CD8-positive, alpha-beta T cell (primary cell): ENCODE measurements at regions of chr11 and their contacts with region 1.

Region 1: GRCh38 chr11:95790123-95790932 is at the start of gene CEP57:
- DNase-seq: peak; percentile 80 to 98 (median 94)
- ATAC-seq: peak; percentile 54
- H3K4me3 ChIP-seq: peak within 1 kb of the TSS; percentile 86 to 93
- H3K4me3 Mint-ChIP-seq: peak within 1 kb of the TSS; percentile 99
- H3K27ac ChIP-seq: peak within 1 kb of the TSS; percentile 99 to 100
- H3K27ac Mint-ChIP-seq: peak within 1 kb of the TSS; percentile 100
- H3K4me1 ChIP-seq: peaks cover 29% of the 10 kb centered on the region
- H3K4me1 Mint-ChIP-seq: peaks cover 63% of the 10 kb centered on the region
- H3K27me3 ChIP-seq: no peaks in the 10 kb centered on the region
- H3K27me3 Mint-ChIP-seq: no peaks in the 10 kb centered on the region
- CTCF ChIP-seq: no peak
- total RNA-seq, gene CEP57: 53.2 to 53.7 TPM

Region 2: GRCh38 chr11:94134651-94135512 is 1655.4 kb before region 1 on chr11:
- CTCF ChIA-PET with region 1: no interaction called
- POLR2A ChIA-PET with region 1: no interaction called
- intact Hi-C with region 1: loop called in 1 of 2 experiments (anchors 5 kb)
- DNase-seq: peak in 1 of 9 experiments; percentile 29
- ATAC-seq: no peak
- H3K4me3 ChIP-seq: no peak overlapping the region
- H3K4me3 Mint-ChIP-seq: no peak overlapping the region
- H3K27ac ChIP-seq: no peak overlapping the region
- H3K27ac Mint-ChIP-seq: no peak overlapping the region
- H3K4me1 ChIP-seq: peaks cover 22% of the 10 kb centered on the region
- H3K4me1 Mint-ChIP-seq: peaks cover 45% of the 10 kb centered on the region
- H3K27me3 ChIP-seq: no peaks in the 10 kb centered on the region
- H3K27me3 Mint-ChIP-seq: no peaks in the 10 kb centered on the region
- CTCF ChIP-seq: no peak

Region 3: GRCh38 chr11:94543695-94544645 is 1246.4 kb before region 1 on chr11 and contains the start of gene FUT4:
- CTCF ChIA-PET with region 1: no interaction called
- POLR2A ChIA-PET with region 1: no interaction called
- intact Hi-C with region 1: loop called (anchors 1 to 5 kb)
- DNase-seq: peak; percentile 26 to 82 (median 69)
- ATAC-seq: peak; percentile 76
- H3K4me3 ChIP-seq: peak within 1 kb of the TSS; percentile 65 to 77
- H3K4me3 Mint-ChIP-seq: peak within 1 kb of the TSS; percentile 99
- H3K27ac ChIP-seq: peak within 1 kb of the TSS; percentile 87 to 90
- H3K27ac Mint-ChIP-seq: peak within 1 kb of the TSS; percentile 100
- H3K4me1 ChIP-seq: peaks cover 22% of the 10 kb centered on the region
- H3K4me1 Mint-ChIP-seq: peaks cover 39% of the 10 kb centered on the region
- H3K27me3 ChIP-seq: no peaks in the 10 kb centered on the region
- H3K27me3 Mint-ChIP-seq: no peaks in the 10 kb centered on the region
- CTCF ChIP-seq: no peak
- total RNA-seq, gene FUT4: 4.7 to 5.2 TPM

Region 4: GRCh38 chr11:95076416-95076815 is 713.9 kb before region 1 on chr11:
- CTCF ChIA-PET with region 1: no interaction called
- POLR2A ChIA-PET with region 1: no interaction called
- intact Hi-C with region 1: loop called in 1 of 2 experiments (anchors 5 kb)
- DNase-seq: no peak
- ATAC-seq: no peak
- H3K4me3 ChIP-seq: no peak overlapping the region
- H3K4me3 Mint-ChIP-seq: no peak overlapping the region
- H3K27ac ChIP-seq: no peak overlapping the region
- H3K27ac Mint-ChIP-seq: no peak overlapping the region
- H3K4me1 ChIP-seq: no peaks in the 10 kb centered on the region
- H3K4me1 Mint-ChIP-seq: peaks cover 5% of the 10 kb centered on the region
- H3K27me3 ChIP-seq: no peaks in the 10 kb centered on the region
- H3K27me3 Mint-ChIP-seq: no peaks in the 10 kb centered on the region
- CTCF ChIP-seq: no peak

Region 5: DNA sequence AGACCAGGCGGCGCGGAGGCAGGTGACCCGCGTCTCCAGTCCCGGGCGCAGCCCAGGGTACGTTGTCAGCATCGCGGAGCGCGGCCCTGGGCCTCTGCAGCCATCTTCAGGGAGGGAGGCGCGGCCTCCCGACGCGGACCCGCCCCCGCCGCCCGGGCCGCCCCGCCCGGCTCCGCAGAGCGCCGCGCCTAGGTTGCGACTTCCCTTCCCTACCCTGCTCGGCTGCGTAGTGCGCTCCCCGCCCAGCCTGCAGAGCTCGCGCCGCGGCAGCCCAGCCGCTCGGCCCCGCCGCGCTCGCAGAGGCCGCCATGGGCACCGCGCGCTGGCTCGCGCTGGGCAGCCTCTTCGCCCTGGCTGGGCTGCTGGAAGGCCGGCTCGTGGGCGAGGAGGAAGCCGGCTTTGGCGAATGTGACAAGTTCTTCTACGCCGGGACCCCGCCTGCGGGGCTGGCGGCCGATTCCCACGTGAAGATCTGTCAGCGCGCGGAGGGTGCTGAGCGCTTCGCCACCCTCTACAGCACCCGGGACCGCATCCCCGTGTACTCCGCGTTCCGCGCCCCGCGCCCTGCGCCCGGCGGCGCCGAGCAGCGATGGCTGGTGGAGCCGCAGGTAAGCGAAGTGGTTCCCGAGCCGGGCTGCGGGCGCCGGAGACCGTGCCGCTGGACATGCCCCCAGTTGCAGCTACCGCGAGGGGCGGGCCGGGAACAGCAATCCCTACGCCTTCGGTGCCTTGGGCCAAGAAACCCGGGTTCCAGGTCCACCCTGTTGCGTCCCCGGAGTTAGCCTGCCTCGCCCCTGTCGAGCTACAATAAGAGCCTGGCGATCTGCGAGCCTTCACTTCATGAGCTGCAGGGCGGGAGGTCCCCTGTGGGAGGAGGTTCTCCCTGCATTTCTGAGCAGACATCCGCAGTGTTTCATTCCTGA is 700.4 kb before region 1 on chr11 and contains the start of gene ENDOD1:
- CTCF ChIA-PET with region 1: interaction called, 5 read pairs
- POLR2A ChIA-PET with region 1: interaction called, 19 read pairs
- intact Hi-C with region 1: loop called (anchors 1 kb)
- DNase-seq: peak; percentile 75 to 92 (median 83)
- ATAC-seq: peak; percentile 94
- H3K4me3 ChIP-seq: peak within 1 kb of the TSS; percentile 66 to 78
- H3K4me3 Mint-ChIP-seq: peak within 1 kb of the TSS; percentile 93
- H3K27ac ChIP-seq: peak within 1 kb of the TSS; percentile 77 to 84
- H3K27ac Mint-ChIP-seq: peak within 1 kb of the TSS; percentile 99
- H3K4me1 ChIP-seq: peaks cover 25% of the 10 kb centered on the region
- H3K4me1 Mint-ChIP-seq: peaks cover 50% of the 10 kb centered on the region
- H3K27me3 ChIP-seq: no peaks in the 10 kb centered on the region
- H3K27me3 Mint-ChIP-seq: no peaks in the 10 kb centered on the region
- CTCF ChIP-seq: no peak
- total RNA-seq, gene ENDOD1: 5.6 to 5.9 TPM

Region 6: GRCh38 chr11:95835768-95836488 is 45.6 kb after region 1 on chr11:
- CTCF ChIA-PET with region 1: interaction called, 3 read pairs
- POLR2A ChIA-PET with region 1: no interaction called
- intact Hi-C with region 1: loop called in 1 of 2 experiments (anchors 2 kb)
- DNase-seq: peak; percentile 8 to 70 (median 55)
- ATAC-seq: peak; percentile 93
- H3K4me3 ChIP-seq: no peak overlapping the region
- H3K4me3 Mint-ChIP-seq: no peak overlapping the region
- H3K27ac ChIP-seq: no peak overlapping the region
- H3K27ac Mint-ChIP-seq: no peak overlapping the region
- H3K4me1 ChIP-seq: no peaks in the 10 kb centered on the region
- H3K4me1 Mint-ChIP-seq: no peaks in the 10 kb centered on the region
- H3K27me3 ChIP-seq: no peaks in the 10 kb centered on the region
- H3K27me3 Mint-ChIP-seq: no peaks in the 10 kb centered on the region
- CTCF ChIP-seq: peak; percentile 86